K562 (cell line): ENCODE measurements at regions of chr5 and their contacts with region 1.

Region 1: DNA sequence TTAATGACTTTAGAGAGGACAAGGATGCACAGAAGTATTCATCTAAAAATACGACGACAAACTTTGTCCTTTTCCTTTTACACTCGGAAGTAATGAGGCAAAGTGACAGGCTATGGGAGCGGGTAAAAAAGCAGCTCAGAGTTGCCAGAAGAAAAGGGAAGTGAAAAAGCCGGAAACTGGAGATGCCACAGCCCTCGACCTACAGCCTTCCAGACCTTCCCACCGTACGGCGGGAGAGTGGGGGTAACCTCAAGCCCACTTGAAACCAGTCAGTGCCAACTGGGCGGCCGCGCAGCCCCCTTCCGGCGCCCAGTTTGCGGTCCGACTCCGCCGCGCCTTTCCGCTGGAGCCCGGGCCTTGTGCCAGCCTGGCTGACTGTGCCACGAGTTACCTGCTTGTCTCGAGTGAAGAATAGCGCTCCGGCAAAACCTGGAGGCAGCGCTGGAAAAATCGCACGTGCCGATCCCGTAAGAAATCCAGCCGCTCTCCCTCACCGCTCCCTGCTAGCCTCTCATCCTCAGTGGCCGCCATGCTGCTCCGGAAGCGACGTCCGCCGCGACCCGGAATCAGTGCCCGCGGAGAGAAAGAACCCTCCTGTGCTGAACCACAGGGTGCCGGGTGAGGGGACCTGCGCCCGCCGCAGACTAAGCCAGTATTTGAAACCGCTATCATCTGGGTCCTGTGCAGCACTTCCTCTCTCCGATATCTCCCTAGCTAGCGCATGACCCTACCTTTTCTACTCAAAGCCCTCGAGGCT is at the start of gene PGGT1B:
- DNase-seq: peak; percentile 32 to 80 (median 57)
- ATAC-seq: peak; percentile 97
- H3K4me3 ChIP-seq: peak within 1 kb of the TSS; percentile 90
- H3K27ac ChIP-seq: peak within 1 kb of the TSS; percentile 84
- H3K4me1 ChIP-seq: peaks cover 2 to 6% of the 10 kb centered on the region in 2 experiments; a peak in 2 of 5 replicates
- H3K27me3 ChIP-seq: no peaks in the 10 kb centered on the region
- CTCF ChIP-seq: no peak
- EP300 ChIP-seq: no peak
- POLR2A ChIP-seq: peak; percentile 88
- RAD21 ChIP-seq: no peak
- polyA plus RNA-seq, gene PGGT1B: 19.8 to 32.3 TPM

Region 2: GRCh38 chr5:115246361-115246991 is 16.0 kb before region 1 on chr5:
- CTCF ChIA-PET with region 1: no interaction called
- POLR2A ChIA-PET with region 1: interaction called, 11 read pairs
- in situ Hi-C with region 1: no loop called
- intact Hi-C with region 1: no loop called
- DNase-seq: peak; percentile 20 to 44 (median 23)
- ATAC-seq: peak; percentile 81
- H3K4me3 ChIP-seq: no peak overlapping the region
- H3K27ac ChIP-seq: no peak overlapping the region
- H3K4me1 ChIP-seq: no peaks in the 10 kb centered on the region
- H3K27me3 ChIP-seq: no peaks in the 10 kb centered on the region
- CTCF ChIP-seq: peak; percentile 27 to 73 (median 51); a peak in 4 of 6 replicates
- EP300 ChIP-seq: no peak
- POLR2A ChIP-seq: no peak
- RAD21 ChIP-seq: peak; percentile 59 to 69

Region 3: GRCh38 chr5:115289104-115289503 is 26.6 kb after region 1 on chr5:
- CTCF ChIA-PET with region 1: no interaction called
- POLR2A ChIA-PET with region 1: no interaction called
- in situ Hi-C with region 1: no loop called
- intact Hi-C with region 1: loop called (anchors 2 kb)
- DNase-seq: no peak
- ATAC-seq: no peak
- H3K4me3 ChIP-seq: no peak overlapping the region
- H3K27ac ChIP-seq: no peak overlapping the region
- H3K4me1 ChIP-seq: no peaks in the 10 kb centered on the region
- H3K27me3 ChIP-seq: no peaks in the 10 kb centered on the region
- CTCF ChIP-seq: no peak
- EP300 ChIP-seq: no peak
- POLR2A ChIP-seq: no peak
- RAD21 ChIP-seq: no peak

Region 4: DNA sequence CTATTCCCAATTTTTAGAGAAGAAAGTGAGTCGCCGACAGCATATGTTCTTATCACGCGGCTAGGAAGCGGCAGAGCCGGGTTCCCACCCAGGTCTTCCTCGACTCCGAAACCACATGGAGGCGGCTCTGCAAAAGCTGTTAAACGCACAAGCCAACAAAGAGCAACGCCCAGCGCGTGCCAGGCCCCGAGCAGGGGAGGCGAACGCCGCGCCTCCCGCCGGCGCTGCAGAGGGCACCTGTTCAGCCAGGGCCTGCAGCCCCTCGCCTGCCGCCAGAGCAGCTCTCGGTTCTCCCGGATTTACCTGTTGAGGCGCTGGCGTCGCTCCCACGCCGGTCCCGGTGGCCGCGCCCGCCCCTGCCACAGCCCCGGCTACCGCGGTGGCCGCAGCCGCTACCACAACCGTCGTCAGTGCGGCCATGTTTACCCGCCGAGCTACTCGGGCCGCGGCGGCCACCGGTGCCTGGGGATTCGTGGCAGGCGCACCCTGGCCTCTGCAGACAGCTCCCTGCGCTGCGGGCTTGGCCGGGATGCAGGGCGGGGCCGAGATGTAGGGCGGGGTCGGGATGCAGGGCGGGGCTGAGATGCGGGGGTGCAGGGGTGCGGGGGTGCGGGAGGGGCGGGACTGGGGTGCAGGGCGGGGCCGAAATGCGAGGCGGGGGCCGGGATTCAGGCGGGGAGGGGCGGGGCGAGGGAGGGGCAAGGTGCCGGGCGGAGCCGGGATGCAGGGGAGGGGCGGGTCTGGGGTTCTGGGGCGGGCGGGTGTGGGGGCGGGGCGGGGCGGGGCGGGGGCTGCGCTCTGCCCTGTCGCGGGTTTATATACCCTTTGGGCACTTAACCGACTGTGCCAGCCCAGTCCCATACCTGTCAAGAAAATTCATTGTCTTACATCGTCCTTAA is 33.9 kb after region 1 on chr5 and contains the start of gene CCDC112:
- CTCF ChIA-PET with region 1: no interaction called
- POLR2A ChIA-PET with region 1: interaction called, 3 read pairs
- in situ Hi-C with region 1: no loop called
- intact Hi-C with region 1: loop called (anchors 1 kb)
- DNase-seq: peak; percentile 83 to 97 (median 96)
- ATAC-seq: peak; percentile 97
- H3K4me3 ChIP-seq: peak within 1 kb of the TSS; percentile 65
- H3K27ac ChIP-seq: peak within 1 kb of the TSS; percentile 69; the same call in 2 of the 3 replicates
- H3K4me1 ChIP-seq: peaks cover 5 to 6% of the 10 kb centered on the region in 2 experiments; a peak in 4 of 5 replicates
- H3K27me3 ChIP-seq: no peaks in the 10 kb centered on the region
- CTCF ChIP-seq: no peak
- EP300 ChIP-seq: no peak
- POLR2A ChIP-seq: peak; percentile 68
- RAD21 ChIP-seq: no peak
- polyA plus RNA-seq, gene CCDC112: 3.3 to 3.5 TPM

Region 5: DNA sequence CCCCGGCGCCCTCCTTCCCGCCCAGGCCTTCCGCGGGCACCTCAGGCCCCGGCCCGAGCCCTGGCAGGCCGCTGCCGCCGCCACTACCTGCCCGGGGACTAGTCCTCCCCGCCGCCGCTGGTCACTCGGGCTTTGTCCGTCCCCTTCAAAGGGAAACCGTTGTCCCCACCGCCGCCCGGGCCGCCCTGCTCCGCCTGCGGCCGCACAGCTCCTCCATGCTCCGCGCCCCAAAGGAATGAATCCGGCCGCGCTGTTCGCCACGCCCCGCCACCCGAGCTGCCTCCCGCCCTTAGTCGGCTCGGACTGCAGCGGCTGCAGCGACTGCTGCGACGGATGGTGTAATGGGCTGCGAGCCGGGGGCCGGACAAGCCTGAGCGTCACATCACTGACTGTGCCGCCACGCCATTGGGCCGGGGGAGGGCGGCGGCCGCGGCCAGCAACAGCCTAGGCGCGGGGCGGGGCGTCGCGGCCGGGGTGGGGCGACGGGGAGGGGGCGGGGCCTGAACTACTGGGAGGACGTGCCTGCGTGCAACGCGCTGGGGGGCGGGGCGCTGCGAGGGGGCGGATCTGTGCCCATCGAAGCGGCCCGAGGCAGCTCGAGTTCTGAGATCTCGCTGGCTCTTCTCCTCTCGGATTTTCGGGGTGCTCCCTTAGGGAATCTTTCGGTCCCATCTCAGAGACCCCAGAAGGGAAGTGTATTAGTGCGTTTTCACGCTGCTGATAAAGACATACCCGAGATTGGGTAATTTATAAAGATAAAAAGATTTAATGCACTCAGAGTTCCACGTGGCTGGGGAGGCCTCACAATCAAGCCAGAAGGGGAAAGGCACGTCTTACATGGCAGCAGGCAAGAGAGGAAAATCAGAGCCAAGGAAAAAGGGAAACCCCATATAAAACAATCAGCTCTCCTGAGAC is 282.2 kb after region 1 on chr5 and contains the start of gene FEM1C:
- CTCF ChIA-PET with region 1: no interaction called
- POLR2A ChIA-PET with region 1: no interaction called
- in situ Hi-C with region 1: no loop called
- intact Hi-C with region 1: loop called (anchors 5 kb)
- DNase-seq: peak; percentile 95 to 96 (median 96)
- ATAC-seq: peak; percentile 97
- H3K4me3 ChIP-seq: peak within 1 kb of the TSS; percentile 84
- H3K27ac ChIP-seq: peak within 1 kb of the TSS; percentile 89
- H3K4me1 ChIP-seq: peaks cover 3 to 7% of the 10 kb centered on the region in 2 experiments; a peak in 2 of 5 replicates
- H3K27me3 ChIP-seq: no peaks in the 10 kb centered on the region
- CTCF ChIP-seq: no peak
- EP300 ChIP-seq: peak; percentile 32; the same call in 1 of the 2 replicates
- POLR2A ChIP-seq: peak; percentile 92
- RAD21 ChIP-seq: no peak
- polyA plus RNA-seq, gene FEM1C: 1.4 to 3.9 TPM